Activated naive CD4-positive, alpha-beta T cell treated with anti-CD3 and anti-CD28 coated beads for 36 hours (primary cell): ENCODE measurements at regions of chr1 and their contacts with region 1.

Region 1: GRCh38 chr1:27257155-27257554 is 22.7 kb downstream of the WDTC1 start:
- DNase-seq: no peak
- H3K4me3 Mint-ChIP-seq: no peak overlapping the region
- H3K27ac Mint-ChIP-seq: no peak overlapping the region
- H3K4me1 Mint-ChIP-seq: peaks cover 56% of the 10 kb centered on the region
- H3K27me3 Mint-ChIP-seq: no peaks in the 10 kb centered on the region

Region 2: GRCh38 chr1:27241677-27242076 is 15.5 kb before region 1 on chr1:
- CTCF ChIA-PET with region 1: interaction called, 10 read pairs
- intact Hi-C with region 1: no loop called
- DNase-seq: no peak
- H3K4me3 Mint-ChIP-seq: no peak overlapping the region
- H3K27ac Mint-ChIP-seq: no peak overlapping the region
- H3K4me1 Mint-ChIP-seq: peaks cover 15% of the 10 kb centered on the region
- H3K27me3 Mint-ChIP-seq: no peaks in the 10 kb centered on the region